CD8-positive, alpha-beta T cell (primary cell): ENCODE measurements at regions of chr10 and their contacts with region 1.

Region 1: GRCh38 chr10:93352638-93353383 is 129.3 kb downstream of the MYOF start:
- DNase-seq: peak in 2 of 9 experiments; percentile 35 to 50
- ATAC-seq: no peak
- H3K4me3 ChIP-seq: no peak overlapping the region
- H3K4me3 Mint-ChIP-seq: no peak overlapping the region
- H3K27ac ChIP-seq: no peak overlapping the region
- H3K27ac Mint-ChIP-seq: no peak overlapping the region
- H3K4me1 ChIP-seq: no peaks in the 10 kb centered on the region
- H3K4me1 Mint-ChIP-seq: no peaks in the 10 kb centered on the region
- H3K27me3 ChIP-seq: no peaks in the 10 kb centered on the region
- H3K27me3 Mint-ChIP-seq: peaks cover 21% of the 10 kb centered on the region
- CTCF ChIP-seq: peak; percentile 75

Region 2: DNA sequence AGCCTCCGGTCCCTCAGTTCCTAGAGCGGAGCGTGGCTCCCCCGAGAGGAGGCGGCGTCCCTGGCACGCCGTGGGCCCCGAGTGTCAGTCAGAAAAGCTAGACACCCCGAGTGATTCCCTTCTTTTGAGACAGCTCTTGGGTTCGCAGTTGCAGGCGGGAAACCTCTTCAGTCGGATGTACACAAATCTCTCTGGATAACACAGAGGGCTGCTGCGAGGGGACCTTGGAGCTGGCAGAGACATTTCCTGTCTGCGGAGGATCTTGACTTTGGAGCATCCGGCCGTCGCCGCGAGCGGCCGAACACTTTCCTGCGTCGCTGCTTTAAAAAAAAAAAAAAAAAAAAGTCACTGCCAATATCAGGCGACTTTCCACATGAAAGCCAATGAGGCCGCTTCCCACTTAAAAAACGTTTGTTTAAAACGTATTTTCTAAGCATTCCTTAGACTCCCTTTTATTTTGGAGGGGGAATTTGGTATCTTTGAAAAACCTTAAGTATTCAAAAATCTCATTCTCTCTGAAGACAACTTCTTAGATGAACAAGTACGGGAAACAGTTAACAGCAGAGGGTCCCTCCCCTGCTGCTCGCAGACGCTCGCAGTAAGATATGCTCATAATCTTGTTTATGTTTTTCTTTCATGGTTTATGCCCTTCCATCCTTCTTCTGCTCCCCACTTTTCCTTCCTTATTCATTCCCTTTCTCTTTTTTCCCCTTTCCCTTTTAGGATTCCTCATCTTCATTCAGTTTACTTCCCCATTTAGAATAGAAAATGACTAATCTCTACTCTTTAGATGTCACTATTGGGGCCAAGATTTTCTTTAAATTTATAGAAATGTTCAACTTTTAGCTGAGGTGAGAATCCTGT is 653.1 kb before region 1 on chr10:
- CTCF ChIA-PET with region 1: no interaction called
- POLR2A ChIA-PET with region 1: no interaction called
- intact Hi-C with region 1: loop called in 1 of 2 experiments (anchors 5 kb)
- DNase-seq: peak in 6 of 9 experiments; percentile 24 to 56 (median 35)
- ATAC-seq: peak; percentile 64
- H3K4me3 ChIP-seq: peak overlapping the region; percentile 31 to 53
- H3K4me3 Mint-ChIP-seq: peak overlapping the region; percentile 77
- H3K27ac ChIP-seq: no peak overlapping the region
- H3K27ac Mint-ChIP-seq: no peak overlapping the region
- H3K4me1 ChIP-seq: peaks cover 22% of the 10 kb centered on the region
- H3K4me1 Mint-ChIP-seq: peaks cover 23% of the 10 kb centered on the region
- H3K27me3 ChIP-seq: peaks cover 7 to 28% of the 10 kb centered on the region in 2 experiments
- H3K27me3 Mint-ChIP-seq: peaks cover 60% of the 10 kb centered on the region
- CTCF ChIP-seq: no peak

Region 3: DNA sequence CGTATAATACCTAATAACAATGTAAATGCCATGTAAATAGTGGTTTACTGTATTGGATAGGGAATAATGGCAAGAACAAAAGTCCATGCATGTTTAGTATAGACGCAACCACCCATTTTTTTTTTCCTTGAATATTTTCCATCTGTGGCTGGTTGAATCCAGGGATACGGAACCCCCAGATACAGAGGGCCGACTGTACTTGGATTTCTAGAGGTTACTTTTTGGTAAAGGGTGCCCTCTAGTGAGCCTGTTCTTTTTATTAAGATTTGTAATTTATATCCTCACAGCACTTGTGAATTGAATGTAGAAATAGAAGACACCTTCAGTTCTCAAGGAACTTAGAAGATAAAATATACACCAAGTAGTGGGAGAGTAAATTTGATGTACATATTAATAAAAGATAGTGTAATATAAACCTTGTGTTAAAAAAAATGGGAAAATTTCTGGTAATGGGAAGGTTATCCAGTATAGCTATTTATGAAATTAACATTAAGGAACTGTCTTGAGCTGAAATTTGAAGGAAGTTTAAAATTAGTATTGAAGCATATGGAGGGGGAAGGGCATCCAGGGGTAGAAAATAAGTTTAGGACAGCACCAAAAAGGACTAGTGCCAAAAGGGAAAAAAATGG is 472.5 kb before region 1 on chr10:
- CTCF ChIA-PET with region 1: interaction called, 18 read pairs
- POLR2A ChIA-PET with region 1: no interaction called
- intact Hi-C with region 1: loop called in 1 of 2 experiments (anchors 1 kb)
- DNase-seq: peak in 3 of 9 experiments; percentile 5 to 56 (median 45)
- ATAC-seq: no peak
- H3K4me3 ChIP-seq: no peak overlapping the region
- H3K4me3 Mint-ChIP-seq: no peak overlapping the region
- H3K27ac ChIP-seq: no peak overlapping the region
- H3K27ac Mint-ChIP-seq: no peak overlapping the region
- H3K4me1 ChIP-seq: peaks cover 12% of the 10 kb centered on the region
- H3K4me1 Mint-ChIP-seq: peaks cover 23% of the 10 kb centered on the region
- H3K27me3 ChIP-seq: no peaks in the 10 kb centered on the region
- H3K27me3 Mint-ChIP-seq: no peaks in the 10 kb centered on the region
- CTCF ChIP-seq: peak; percentile 52

Region 4: DNA sequence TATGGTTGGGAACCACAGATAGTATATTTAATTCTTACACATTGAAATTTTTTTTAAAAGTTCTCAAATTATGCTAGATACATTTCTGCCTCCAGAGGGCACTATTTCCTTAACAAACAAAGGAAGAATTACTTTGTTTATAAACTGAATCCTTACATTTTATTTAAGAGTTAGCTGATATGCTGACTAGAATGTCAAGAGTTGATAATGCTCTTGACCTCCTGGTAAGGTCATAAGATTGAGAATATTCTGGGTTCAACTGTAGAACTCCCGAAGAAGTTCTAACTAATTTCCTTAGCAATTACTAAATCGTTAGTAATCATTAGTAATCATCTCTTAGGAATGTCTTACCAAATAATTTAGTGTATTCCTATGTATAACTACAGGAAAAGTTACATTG is 387.5 kb before region 1 on chr10:
- CTCF ChIA-PET with region 1: interaction called, 3 read pairs
- POLR2A ChIA-PET with region 1: no interaction called
- intact Hi-C with region 1: loop called in 1 of 2 experiments (anchors 5 kb)
- DNase-seq: peak in 2 of 9 experiments; percentile 33 to 49
- ATAC-seq: no peak
- H3K4me3 ChIP-seq: no peak overlapping the region
- H3K4me3 Mint-ChIP-seq: no peak overlapping the region
- H3K27ac ChIP-seq: no peak overlapping the region
- H3K27ac Mint-ChIP-seq: no peak overlapping the region
- H3K4me1 ChIP-seq: no peaks in the 10 kb centered on the region
- H3K4me1 Mint-ChIP-seq: no peaks in the 10 kb centered on the region
- H3K27me3 ChIP-seq: no peaks in the 10 kb centered on the region
- H3K27me3 Mint-ChIP-seq: no peaks in the 10 kb centered on the region
- CTCF ChIP-seq: peak; percentile 60

Region 5: GRCh38 chr10:93115661-93116383 is 237.0 kb before region 1 on chr10:
- CTCF ChIA-PET with region 1: interaction called, 6 read pairs
- POLR2A ChIA-PET with region 1: no interaction called
- intact Hi-C with region 1: loop called in 1 of 2 experiments (anchors 2 kb)
- DNase-seq: peak; percentile 40 to 80 (median 67)
- ATAC-seq: peak; percentile 64
- H3K4me3 ChIP-seq: no peak overlapping the region
- H3K4me3 Mint-ChIP-seq: no peak overlapping the region
- H3K27ac ChIP-seq: no peak overlapping the region
- H3K27ac Mint-ChIP-seq: peak overlapping the region; percentile 11
- H3K4me1 ChIP-seq: peaks cover 14% of the 10 kb centered on the region
- H3K4me1 Mint-ChIP-seq: peaks cover 12% of the 10 kb centered on the region
- H3K27me3 ChIP-seq: no peaks in the 10 kb centered on the region
- H3K27me3 Mint-ChIP-seq: peaks cover 24% of the 10 kb centered on the region
- CTCF ChIP-seq: no peak

Region 6: GRCh38 chr10:93152136-93152535 is 200.7 kb before region 1 on chr10:
- CTCF ChIA-PET with region 1: no interaction called
- POLR2A ChIA-PET with region 1: no interaction called
- intact Hi-C with region 1: no loop called
- DNase-seq: no peak
- ATAC-seq: no peak
- H3K4me3 ChIP-seq: no peak overlapping the region
- H3K4me3 Mint-ChIP-seq: no peak overlapping the region
- H3K27ac ChIP-seq: no peak overlapping the region
- H3K27ac Mint-ChIP-seq: no peak overlapping the region
- H3K4me1 ChIP-seq: peaks cover 14% of the 10 kb centered on the region
- H3K4me1 Mint-ChIP-seq: peaks cover 20% of the 10 kb centered on the region
- H3K27me3 ChIP-seq: no peaks in the 10 kb centered on the region
- H3K27me3 Mint-ChIP-seq: peaks cover 3% of the 10 kb centered on the region
- CTCF ChIP-seq: no peak

Region 7: DNA sequence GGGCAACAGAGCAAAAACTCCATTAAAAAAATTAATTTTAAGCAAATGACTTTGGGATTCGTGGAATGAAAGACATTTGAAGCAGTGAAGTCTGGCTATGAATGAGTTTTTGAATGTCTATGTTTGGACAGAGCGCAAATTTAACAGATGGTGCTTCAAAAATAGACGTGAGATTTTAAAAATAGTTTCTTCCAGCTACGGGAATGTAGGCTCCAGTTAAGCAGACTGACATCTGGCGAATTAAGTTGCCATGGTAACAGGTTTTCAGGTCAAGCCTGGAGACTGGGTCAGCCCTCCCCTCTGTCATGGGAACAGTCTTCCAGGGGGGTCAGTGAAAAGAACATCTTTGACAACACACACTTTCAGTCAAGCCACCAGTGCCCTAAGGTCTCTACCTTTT is 67.3 kb after region 1 on chr10:
- CTCF ChIA-PET with region 1: no interaction called
- POLR2A ChIA-PET with region 1: no interaction called
- intact Hi-C with region 1: no loop called
- DNase-seq: no peak
- ATAC-seq: no peak
- H3K4me3 ChIP-seq: no peak overlapping the region
- H3K4me3 Mint-ChIP-seq: no peak overlapping the region
- H3K27ac ChIP-seq: no peak overlapping the region
- H3K27ac Mint-ChIP-seq: no peak overlapping the region
- H3K4me1 ChIP-seq: peaks cover 2% of the 10 kb centered on the region
- H3K4me1 Mint-ChIP-seq: peaks cover 8% of the 10 kb centered on the region
- H3K27me3 ChIP-seq: no peaks in the 10 kb centered on the region
- H3K27me3 Mint-ChIP-seq: no peaks in the 10 kb centered on the region
- CTCF ChIP-seq: no peak